Lower leg skin (tissue), 4 donors: ENCODE measurements at regions of chr1 and their contacts with region 1.

Region 1: GRCh38 chr1:85200870-85201339 is at the start of gene SYDE2:
- DNase-seq: peak; percentile 51 to 94
- H3K4me3 ChIP-seq: peak within 1 kb of the TSS; percentile 74
- CTCF ChIP-seq: no peak
- POLR2A ChIP-seq: no peak
- total RNA-seq, gene SYDE2: 8.6 to 12.5 (median 10.4) TPM

Region 2: GRCh38 chr1:84833198-84833597 is 367.7 kb before region 1 on chr1:
- intact Hi-C with region 1: no loop called
- DNase-seq: no peak
- H3K4me3 ChIP-seq: no peak overlapping the region
- CTCF ChIP-seq: no peak
- POLR2A ChIP-seq: no peak

Region 3: GRCh38 chr1:85259118-85259911 is 58.4 kb after region 1 on chr1 and contains the start of gene C1orf52:
- intact Hi-C with region 1: loop called (anchors 10 kb)
- DNase-seq: peak; percentile 93 to 99
- H3K4me3 ChIP-seq: peak within 1 kb of the TSS; percentile 88
- CTCF ChIP-seq: peak in 1 of 3 donors; percentile 92
- POLR2A ChIP-seq: peak in 1 of 2 donors; percentile 76
- total RNA-seq, gene C1orf52: 12.4 to 27.0 (median 20.5) TPM